Activated naive CD4-positive, alpha-beta T cell treated with anti-CD3 and anti-CD28 coated beads for 36 hours (primary cell): ENCODE measurements at regions of chr2 and their contacts with region 1.

Region 1: DNA sequence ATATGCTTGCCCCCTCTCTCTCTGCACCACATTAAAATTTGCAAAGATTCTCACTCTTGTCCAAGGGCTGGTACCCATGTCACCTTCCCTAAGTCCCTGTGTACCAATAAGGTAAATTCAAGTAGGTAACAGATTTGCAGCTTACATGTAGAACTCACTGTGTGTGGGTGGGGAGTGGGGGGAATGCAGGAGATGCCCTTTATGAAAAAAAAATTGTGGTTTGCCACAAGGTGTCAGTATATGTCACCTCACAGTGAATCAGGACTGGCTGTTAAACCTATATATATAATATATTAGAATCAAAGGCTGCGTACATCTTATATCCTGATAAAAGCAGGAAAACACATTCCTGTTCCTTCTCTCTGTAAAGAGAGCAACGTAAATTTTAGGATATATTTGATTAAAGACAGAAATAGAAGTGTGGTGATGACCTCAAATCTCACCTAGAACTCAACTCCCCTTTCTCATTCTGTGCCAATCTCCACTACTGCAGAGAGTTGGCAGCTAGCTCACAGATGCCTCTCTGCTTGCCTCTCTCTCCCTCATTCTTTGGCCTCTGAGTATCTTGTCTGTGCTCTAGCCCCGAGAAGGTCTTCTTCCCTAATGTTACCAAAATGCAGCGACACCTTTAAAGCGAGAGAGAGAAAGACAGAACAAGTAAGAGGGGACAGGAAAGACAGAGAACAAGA is 536 bp downstream of the XDH start:
- DNase-seq: no peak
- H3K4me3 Mint-ChIP-seq: no peak overlapping the region
- H3K27ac Mint-ChIP-seq: no peak overlapping the region
- H3K4me1 Mint-ChIP-seq: peaks cover 5% of the 10 kb centered on the region
- H3K27me3 Mint-ChIP-seq: peaks cover 2% of the 10 kb centered on the region

Region 2: DNA sequence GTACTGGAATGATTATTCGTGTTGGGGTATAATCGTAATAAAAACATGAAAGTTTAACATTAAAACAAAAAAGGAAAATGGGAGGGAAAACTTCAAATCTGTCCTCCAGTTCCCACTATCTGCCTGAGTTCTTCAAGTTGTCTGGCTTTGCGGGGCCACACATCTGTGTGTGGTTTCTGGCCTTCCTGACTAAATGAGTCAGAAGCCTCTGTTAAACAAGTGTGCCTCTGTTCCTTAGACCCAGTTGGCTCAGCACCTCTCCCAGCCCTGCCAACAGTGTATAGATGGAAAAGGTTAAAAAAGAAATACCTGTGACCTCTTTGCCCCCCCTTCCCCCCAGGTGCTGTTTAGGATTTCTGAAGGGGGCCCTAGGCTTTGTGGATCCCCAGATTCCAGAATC is 29.7 kb before region 1 on chr2:
- CTCF ChIA-PET with region 1: no interaction called
- intact Hi-C with region 1: no loop called
- DNase-seq: peak; percentile 14
- H3K4me3 Mint-ChIP-seq: no peak overlapping the region
- H3K27ac Mint-ChIP-seq: no peak overlapping the region
- H3K4me1 Mint-ChIP-seq: no peaks in the 10 kb centered on the region
- H3K27me3 Mint-ChIP-seq: no peaks in the 10 kb centered on the region

Region 3: DNA sequence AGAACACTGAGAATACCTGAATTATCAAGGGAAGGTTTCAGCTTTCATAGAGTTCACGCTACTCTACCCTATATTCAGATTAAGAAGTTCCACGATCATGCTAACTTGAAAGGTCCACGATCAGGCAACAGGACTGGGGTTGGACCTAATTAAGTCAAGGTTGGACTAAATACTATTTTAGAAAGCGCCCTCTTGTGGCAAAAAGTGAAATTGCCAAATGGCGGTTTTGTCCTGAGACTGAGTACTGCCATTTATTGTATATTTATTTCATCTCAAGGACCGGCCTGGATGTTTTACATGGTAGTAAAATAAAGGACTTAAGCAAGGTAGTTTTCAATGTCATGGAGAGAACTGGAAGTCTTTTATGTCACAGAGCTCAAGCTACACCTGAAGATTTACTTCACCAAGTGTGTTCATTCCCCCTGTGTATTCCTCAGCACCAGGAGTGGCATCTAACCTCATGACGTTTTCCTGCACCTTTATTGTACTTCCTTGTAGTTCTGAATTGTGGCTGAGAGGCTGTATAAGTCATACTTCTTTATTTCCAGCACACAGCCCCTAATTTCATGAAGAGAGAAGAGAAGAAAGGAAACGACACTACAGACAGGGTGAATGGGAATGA is 110.0 kb after region 1 on chr2:
- CTCF ChIA-PET with region 1: interaction called, 4 read pairs
- intact Hi-C with region 1: loop called (anchors 2 kb)
- DNase-seq: peak; percentile 74
- H3K4me3 Mint-ChIP-seq: no peak overlapping the region
- H3K27ac Mint-ChIP-seq: no peak overlapping the region
- H3K4me1 Mint-ChIP-seq: no peaks in the 10 kb centered on the region
- H3K27me3 Mint-ChIP-seq: peaks cover 10% of the 10 kb centered on the region

Region 4: GRCh38 chr2:31606509-31606908 is 192.5 kb after region 1 on chr2:
- CTCF ChIA-PET with region 1: no interaction called
- intact Hi-C with region 1: no loop called
- DNase-seq: no peak
- H3K4me3 Mint-ChIP-seq: no peak overlapping the region
- H3K27ac Mint-ChIP-seq: no peak overlapping the region
- H3K4me1 Mint-ChIP-seq: no peaks in the 10 kb centered on the region
- H3K27me3 Mint-ChIP-seq: peaks cover 5% of the 10 kb centered on the region

Region 5: DNA sequence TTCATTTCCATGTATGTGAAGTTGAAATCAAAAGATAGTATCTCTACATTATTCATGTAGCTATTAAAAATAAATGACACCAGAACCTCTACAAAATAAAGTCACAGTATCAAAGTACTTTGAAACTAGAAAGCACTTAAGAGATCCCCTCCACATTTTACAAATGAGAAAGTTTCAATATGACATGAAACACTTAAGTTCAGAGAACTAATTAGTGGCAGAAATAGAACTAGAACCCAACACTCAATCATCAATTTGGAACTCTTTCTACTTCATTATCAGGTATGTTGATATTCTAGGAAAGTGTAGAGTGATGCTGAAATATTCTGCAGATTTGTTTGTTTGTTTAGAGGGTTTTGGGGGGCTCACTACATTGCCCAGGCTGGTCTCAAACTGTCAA is 451.2 kb after region 1 on chr2:
- CTCF ChIA-PET with region 1: no interaction called
- intact Hi-C with region 1: no loop called
- DNase-seq: no peak
- H3K4me3 Mint-ChIP-seq: no peak overlapping the region
- H3K27ac Mint-ChIP-seq: no peak overlapping the region
- H3K4me1 Mint-ChIP-seq: no peaks in the 10 kb centered on the region
- H3K27me3 Mint-ChIP-seq: no peaks in the 10 kb centered on the region